ENCODE measurements at regions of chr18 and their contacts with region 1.

Region 1: DNA sequence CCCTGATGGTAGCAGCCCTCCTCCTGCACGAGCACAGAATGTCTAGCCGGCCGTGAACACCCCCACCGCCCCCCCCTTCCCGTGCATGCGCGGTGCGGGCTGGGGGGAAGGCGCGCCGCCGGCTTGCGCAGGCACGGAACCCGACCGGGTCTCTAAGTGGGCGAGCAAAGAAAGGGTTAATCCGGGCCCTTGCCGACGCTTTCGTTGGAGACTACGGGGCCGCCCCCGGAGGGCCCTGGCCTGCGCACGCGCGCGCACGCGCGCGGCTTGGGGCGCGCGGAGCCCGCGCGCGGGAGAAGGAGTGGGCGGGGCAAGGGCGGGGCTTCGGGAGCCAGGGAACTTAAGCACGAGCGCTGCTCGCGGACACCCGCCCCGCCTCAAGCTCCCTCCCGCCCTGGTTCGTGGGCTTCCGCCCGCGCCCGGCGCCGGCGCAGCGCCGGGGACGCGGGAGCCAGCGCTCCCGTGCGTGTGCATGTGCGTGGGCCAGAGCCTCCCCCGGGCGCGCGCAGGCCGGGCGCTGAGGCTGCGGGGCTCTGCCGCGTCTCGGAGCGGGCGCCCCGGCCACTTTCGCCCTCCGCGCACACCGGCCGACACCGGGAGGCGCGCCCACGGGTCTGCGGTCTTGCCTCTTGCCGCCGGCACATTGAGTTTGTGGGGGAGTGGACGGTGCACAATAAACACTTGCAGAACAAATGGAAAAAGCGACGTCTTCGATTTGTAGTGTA is 617 bp upstream of the ZBTB14 start:
- DNase-seq: peak; percentile 90 to 94 (median 93)
- H3K4me3 ChIP-seq: peak overlapping the region; percentile 89 to 97 (median 90)
- H3K4me3 Mint-ChIP-seq: peak overlapping the region; percentile 96
- H3K27ac ChIP-seq: peak overlapping the region; percentile 91 to 94
- H3K27ac Mint-ChIP-seq: peak overlapping the region; percentile 91 to 96 (median 95)
- H3K4me1 ChIP-seq: peaks cover 20 to 26% of the 10 kb centered on the region in 2 donors
- H3K4me1 Mint-ChIP-seq: peaks cover 19% of the 10 kb centered on the region
- H3K27me3 ChIP-seq: peaks cover 0 to 5% of the 10 kb centered on the region in 2 donors
- H3K27me3 Mint-ChIP-seq: peaks cover 2 to 6% (median 3%) of the 10 kb centered on the region in 3 donors
- CTCF ChIP-seq: no peak

Region 2: GRCh38 chr18:5237723-5238370 is 58.3 kb before region 1 on chr18:
- intact Hi-C with region 1: loop called (anchors 5 kb)
- DNase-seq: peak; percentile 68 to 85 (median 79)
- H3K4me3 ChIP-seq: peak overlapping the region; percentile 66 to 80 (median 79)
- H3K4me3 Mint-ChIP-seq: peak overlapping the region; percentile 87 to 98
- H3K27ac ChIP-seq: peak overlapping the region; percentile 89 to 97
- H3K27ac Mint-ChIP-seq: peak overlapping the region; percentile 97 to 99 (median 98)
- H3K4me1 ChIP-seq: peaks cover 22 to 28% of the 10 kb centered on the region in 2 donors
- H3K4me1 Mint-ChIP-seq: peaks cover 34% of the 10 kb centered on the region
- H3K27me3 ChIP-seq: peaks cover 0 to 9% of the 10 kb centered on the region in 2 donors
- H3K27me3 Mint-ChIP-seq: peaks cover 8 to 16% (median 12%) of the 10 kb centered on the region in 3 donors
- CTCF ChIP-seq: peak; percentile 23

Region 3: GRCh38 chr18:5456577-5457463 is 160.7 kb after region 1 on chr18:
- intact Hi-C with region 1: loop called in 1 of 2 experiments (anchors 5 kb)
- DNase-seq: peak; percentile 35 to 60 (median 58)
- H3K4me3 ChIP-seq: peak overlapping the region; percentile 6 to 46 (median 8)
- H3K4me3 Mint-ChIP-seq: peak overlapping the region; percentile 66 to 83
- H3K27ac ChIP-seq: peak overlapping the region; percentile 25 to 79
- H3K27ac Mint-ChIP-seq: peak overlapping the region; percentile 80 to 89 (median 86)
- H3K4me1 ChIP-seq: peaks cover 32 to 44% of the 10 kb centered on the region in 2 donors
- H3K4me1 Mint-ChIP-seq: peaks cover 37% of the 10 kb centered on the region
- H3K27me3 ChIP-seq: no peaks in the 10 kb centered on the region
- H3K27me3 Mint-ChIP-seq: peaks cover 0 to 2% (median 0%) of the 10 kb centered on the region in 3 donors
- CTCF ChIP-seq: peak; percentile 68

Region 4: DNA sequence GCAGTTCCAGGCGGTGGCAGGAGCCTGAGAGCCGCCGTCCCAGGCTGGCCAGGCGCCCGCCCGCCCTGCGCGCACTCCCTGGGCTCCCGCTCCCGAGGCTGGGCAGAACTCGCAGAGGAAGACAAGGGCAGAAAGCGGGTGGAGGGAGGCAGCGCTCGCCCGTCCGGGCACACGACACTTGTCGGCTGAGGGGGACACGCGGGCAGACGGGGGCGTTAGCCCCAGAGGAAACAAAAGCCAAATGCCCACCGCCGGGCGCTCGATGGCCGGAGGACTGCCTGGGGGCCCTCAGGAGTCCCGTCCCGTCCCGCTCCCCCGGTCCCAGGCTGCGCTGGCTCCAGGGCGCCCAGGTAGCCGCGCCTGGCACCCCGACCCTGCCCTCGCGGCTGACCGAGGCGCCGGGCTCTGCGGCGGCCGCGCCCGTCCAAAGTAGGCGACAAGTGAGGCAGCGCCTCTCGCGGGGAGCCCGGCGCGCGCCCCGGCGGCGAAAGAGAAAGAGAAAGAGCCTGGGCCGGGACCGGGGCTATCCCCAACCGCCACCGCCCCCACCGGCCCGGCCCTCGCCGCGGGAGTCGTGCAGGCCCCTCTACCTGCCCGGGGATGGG is 1118.1 kb after region 1 on chr18:
- intact Hi-C with region 1: loop called in 1 of 2 experiments (anchors 10 kb)
- DNase-seq: peak; percentile 60 to 68 (median 61)
- H3K4me3 ChIP-seq: peak overlapping the region; percentile 66 to 98 (median 86)
- H3K4me3 Mint-ChIP-seq: peak overlapping the region; percentile 83 to 91
- H3K27ac ChIP-seq: peak overlapping the region; percentile 41 to 82
- H3K27ac Mint-ChIP-seq: peak overlapping the region in 4 of 7 donors; percentile 61 to 82 (median 67)
- H3K4me1 ChIP-seq: peaks cover 22 to 26% of the 10 kb centered on the region in 2 donors
- H3K4me1 Mint-ChIP-seq: peaks cover 24% of the 10 kb centered on the region
- H3K27me3 ChIP-seq: peaks cover 0 to 8% of the 10 kb centered on the region in 2 donors
- H3K27me3 Mint-ChIP-seq: peaks cover 14 to 22% (median 19%) of the 10 kb centered on the region in 3 donors
- CTCF ChIP-seq: no peak